ENCODE measurements at regions of chr13 and their contacts with region 1.

Region 1: DNA sequence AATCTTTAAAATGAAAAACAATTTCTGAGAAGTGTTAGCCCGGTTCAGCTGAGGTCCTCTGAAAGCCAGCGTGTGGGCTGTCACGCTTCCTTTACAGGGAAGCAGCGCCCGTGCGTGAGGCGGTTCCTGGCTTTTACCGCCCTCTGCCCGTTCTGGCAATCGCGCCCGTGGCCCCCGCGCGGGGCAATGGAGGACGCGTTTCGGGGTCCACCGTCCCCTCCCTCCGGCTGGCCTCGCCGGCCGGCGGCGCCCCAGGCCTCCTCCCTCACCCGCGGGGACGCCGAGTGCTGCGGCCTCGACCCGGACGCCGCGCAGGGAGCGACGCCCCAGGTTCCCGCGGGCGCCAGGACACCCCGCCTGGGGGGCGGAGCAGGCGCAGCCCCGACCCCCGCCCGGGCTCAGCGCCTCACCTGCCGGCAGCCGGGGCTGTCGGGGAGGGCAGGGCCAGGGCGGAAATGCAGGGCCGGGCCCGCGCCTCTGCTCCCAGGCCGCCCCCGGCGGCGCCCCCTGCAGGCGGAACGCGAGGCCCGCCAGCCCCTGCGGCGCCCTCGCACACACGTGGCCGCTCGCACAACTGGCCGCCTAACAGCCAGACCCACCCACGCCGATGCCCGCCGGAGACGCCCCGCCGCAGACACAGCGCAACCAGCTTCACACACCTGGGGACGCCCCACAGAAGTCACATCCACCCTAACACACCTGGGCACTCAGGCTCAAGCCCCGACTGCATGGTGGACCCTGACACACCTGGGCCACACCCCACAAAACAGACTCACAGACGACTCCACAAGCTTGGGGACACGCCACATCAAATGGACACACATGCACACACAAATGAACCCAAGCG is at the start of gene GGACT:
- DNase-seq: peak; percentile 95
- H3K4me3 Mint-ChIP-seq: peak within 1 kb of the TSS; percentile 84
- H3K27ac Mint-ChIP-seq: peak within 1 kb of the TSS; percentile 96
- H3K4me1 Mint-ChIP-seq: peaks cover 44% of the 10 kb centered on the region
- H3K27me3 Mint-ChIP-seq: no peaks in the 10 kb centered on the region
- total RNA-seq, gene GGACT: 4.4 and 5.9 TPM in 2 replicates

Region 2: DNA sequence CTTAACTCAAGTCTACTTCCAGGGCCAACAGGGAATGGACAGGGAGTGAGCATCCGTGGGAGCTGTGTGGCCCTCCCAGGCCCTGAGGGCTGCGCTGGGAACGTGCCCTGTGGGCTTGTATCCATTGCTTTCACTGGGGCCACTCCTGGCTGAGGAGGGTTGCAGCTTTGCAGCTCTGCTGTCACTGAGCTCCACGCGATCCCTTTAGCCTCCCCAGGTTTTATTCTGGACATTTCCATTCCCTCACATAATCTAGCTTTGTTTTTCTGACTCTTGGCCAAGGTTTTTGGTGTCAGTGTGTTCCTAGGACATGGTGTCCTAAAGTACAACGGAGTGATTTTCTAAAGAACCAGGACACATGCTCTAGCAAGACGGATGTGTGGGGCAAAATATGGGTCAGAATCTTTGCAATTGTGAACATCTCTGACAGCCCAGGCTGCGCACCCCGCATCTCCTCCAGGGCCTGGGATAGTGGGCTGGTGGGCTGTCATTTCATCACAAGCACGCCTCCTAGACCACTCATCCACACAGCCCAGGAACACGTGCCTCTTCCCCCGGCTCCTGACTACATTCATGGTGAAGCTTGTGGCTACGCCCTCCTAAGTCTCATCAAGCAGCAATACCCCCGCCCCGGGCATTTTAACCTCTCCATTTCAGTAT is 27.9 kb before region 1 on chr13:
- intact Hi-C with region 1: loop called (anchors 1 kb)
- DNase-seq: no peak
- H3K4me3 Mint-ChIP-seq: no peak overlapping the region
- H3K27ac Mint-ChIP-seq: no peak overlapping the region
- H3K4me1 Mint-ChIP-seq: peaks cover 2% of the 10 kb centered on the region
- H3K27me3 Mint-ChIP-seq: peaks cover 3% of the 10 kb centered on the region

Region 3: GRCh38 chr13:100573121-100573520 is 15.4 kb before region 1 on chr13:
- intact Hi-C with region 1: loop called (anchors 2 kb)
- DNase-seq: peak; percentile 92
- H3K4me3 Mint-ChIP-seq: no peak overlapping the region
- H3K27ac Mint-ChIP-seq: no peak overlapping the region
- H3K4me1 Mint-ChIP-seq: peaks cover 19% of the 10 kb centered on the region
- H3K27me3 Mint-ChIP-seq: no peaks in the 10 kb centered on the region

Measured in activated CD4-positive, alpha-beta T cell treated with anti-CD3 and anti-CD28 coated beads, Interleukin-2, amount 10 ng/mL, durations not matched to agents 24 days and 14 days (primary cell).